HCT116 (cell line): ENCODE measurements at regions of chr1 and their contacts with region 1.

Region 1: DNA sequence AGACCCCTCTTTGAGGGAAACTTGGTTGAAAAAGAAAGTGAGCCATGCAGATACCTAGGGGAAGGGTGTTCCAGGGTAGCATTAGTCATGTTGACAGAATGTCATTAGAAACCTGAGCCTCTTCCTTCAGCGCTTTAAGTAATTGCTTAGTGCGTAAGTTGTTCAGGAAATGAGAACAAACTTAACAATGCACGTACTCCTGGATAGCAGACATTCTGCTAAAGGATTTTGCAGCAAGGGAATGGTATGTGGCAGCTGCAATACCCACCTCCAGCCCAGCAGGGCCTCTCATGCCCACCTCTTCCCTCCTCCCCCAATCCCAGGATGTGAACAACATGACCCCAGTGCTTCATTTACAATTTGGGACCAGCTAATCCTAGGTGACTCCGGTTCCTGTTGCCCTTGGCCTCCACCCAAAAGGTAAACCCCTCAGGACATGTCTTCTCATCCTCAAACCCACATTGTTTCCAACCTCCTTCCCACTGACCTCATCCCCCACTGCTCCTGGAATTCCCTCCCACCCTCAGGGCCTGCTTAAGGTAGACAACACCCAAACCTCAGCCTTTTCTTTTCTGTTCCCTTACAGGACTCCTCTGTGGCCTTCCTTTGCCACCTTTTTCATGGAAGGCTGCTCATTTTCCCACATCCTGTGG is 98.0 kb upstream of the BCAR3 start:
- DNase-seq: peak; percentile 83
- ATAC-seq: peak; percentile 75
- H3K4me3 ChIP-seq: peak overlapping the region; percentile 10 to 34; a peak in 3 of 4 replicates
- H3K27ac ChIP-seq: peak overlapping the region; percentile 65
- H3K4me1 ChIP-seq: peaks cover 23 to 66% of the 10 kb centered on the region in 2 experiments
- H3K27me3 ChIP-seq: no peaks in the 10 kb centered on the region
- CTCF ChIP-seq: no peak
- POLR2A ChIP-seq: no peak
- RAD21 ChIP-seq: no peak; the same call in 1 of the 2 replicates

Region 2: DNA sequence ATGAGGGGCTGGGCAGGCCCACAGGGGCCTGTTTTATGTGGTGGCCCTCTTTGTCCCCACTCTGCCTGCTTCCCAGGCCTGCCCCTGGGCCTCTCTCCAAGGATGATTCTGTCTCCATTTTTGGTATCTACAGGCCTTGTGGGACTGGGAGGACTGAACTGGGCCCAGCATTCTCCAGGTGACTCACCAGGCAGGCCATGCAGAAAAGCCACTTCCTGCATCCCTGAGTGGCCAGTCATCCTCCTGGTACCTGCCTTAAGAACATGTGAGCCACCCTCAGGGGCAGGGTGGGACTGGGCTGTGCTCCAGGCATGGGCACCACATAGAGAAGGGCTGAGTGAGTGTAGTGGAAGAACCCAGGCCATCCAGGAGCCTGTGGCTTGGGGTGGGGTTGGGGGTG is 78.0 kb before region 1 on chr1:
- CTCF ChIA-PET with region 1: no interaction called
- POLR2A ChIA-PET with region 1: no interaction called
- RAD21 ChIA-PET with region 1: no interaction called
- intact Hi-C with region 1: loop called (anchors 5 kb)
- DNase-seq: peak; percentile 97
- ATAC-seq: peak; percentile 84
- H3K4me3 ChIP-seq: peak overlapping the region in 1 of 2 experiments; percentile 6; a peak in 1 of 4 replicates
- H3K27ac ChIP-seq: peak overlapping the region; percentile 74
- H3K4me1 ChIP-seq: peaks cover 41 to 97% of the 10 kb centered on the region in 2 experiments
- H3K27me3 ChIP-seq: no peaks in the 10 kb centered on the region
- CTCF ChIP-seq: no peak
- POLR2A ChIP-seq: no peak
- RAD21 ChIP-seq: no peak

Region 3: DNA sequence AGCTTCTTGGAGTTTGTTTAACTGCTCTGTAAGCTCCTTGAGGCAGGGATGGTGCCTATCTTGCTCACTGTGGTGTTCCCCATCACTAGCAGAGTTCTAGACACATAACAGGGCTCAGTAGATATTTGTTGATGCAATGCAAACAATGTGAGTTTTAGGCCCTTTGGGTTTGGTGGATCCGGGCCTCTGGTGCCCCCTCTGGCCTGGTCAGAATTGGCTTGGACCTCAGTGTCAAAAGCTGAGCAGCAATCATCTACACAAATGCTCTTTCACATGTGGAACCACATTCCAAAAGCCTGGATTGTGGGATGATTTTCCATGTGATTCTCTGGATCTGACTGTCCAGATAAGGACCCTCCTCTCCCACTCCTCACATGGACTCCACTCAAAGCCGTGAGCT is 44.7 kb before region 1 on chr1:
- CTCF ChIA-PET with region 1: no interaction called
- POLR2A ChIA-PET with region 1: interaction called, 4 read pairs
- RAD21 ChIA-PET with region 1: no interaction called
- intact Hi-C with region 1: loop called (anchors 1 kb)
- DNase-seq: no peak
- ATAC-seq: no peak
- H3K4me3 ChIP-seq: no peak overlapping the region
- H3K27ac ChIP-seq: no peak overlapping the region
- H3K4me1 ChIP-seq: peaks cover 19 to 80% of the 10 kb centered on the region in 2 experiments
- H3K27me3 ChIP-seq: no peaks in the 10 kb centered on the region
- CTCF ChIP-seq: peak in 2 of 3 experiments; percentile 54 to 60; a peak in 4 of 6 replicates
- POLR2A ChIP-seq: no peak
- RAD21 ChIP-seq: peak; percentile 38

Region 4: GRCh38 chr1:93754155-93754763 is 25.4 kb before region 1 on chr1:
- CTCF ChIA-PET with region 1: no interaction called
- POLR2A ChIA-PET with region 1: interaction called, 7 read pairs
- RAD21 ChIA-PET with region 1: no interaction called
- intact Hi-C with region 1: loop called (anchors 2 kb)
- DNase-seq: no peak
- ATAC-seq: peak; percentile 75
- H3K4me3 ChIP-seq: no peak overlapping the region
- H3K27ac ChIP-seq: no peak overlapping the region
- H3K4me1 ChIP-seq: peaks cover 16 to 62% of the 10 kb centered on the region in 2 experiments
- H3K27me3 ChIP-seq: no peaks in the 10 kb centered on the region
- CTCF ChIP-seq: no peak
- POLR2A ChIP-seq: no peak
- RAD21 ChIP-seq: no peak